IMR-90 (cell line): ENCODE measurements at regions of chr1 and their contacts with region 1.

Region 1: DNA sequence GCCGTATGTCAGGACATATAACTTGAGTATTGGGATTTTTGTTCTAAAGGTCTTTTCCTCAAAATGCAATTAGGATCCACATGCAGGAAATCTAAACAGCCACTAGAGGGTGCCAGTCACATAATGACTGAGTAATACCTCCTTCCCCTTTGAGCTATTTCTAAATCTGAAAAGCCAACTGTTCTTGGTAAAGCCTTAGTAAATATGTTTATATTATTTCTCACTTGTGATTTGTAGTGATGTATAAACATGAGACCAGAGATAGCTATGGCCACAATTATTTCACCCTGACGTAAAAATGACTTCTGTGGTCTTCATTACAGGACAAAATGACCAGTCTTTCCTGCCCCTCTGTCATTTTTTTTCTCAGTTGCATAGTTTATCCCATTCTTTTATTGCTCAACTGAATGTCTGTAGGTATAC is 41.0 kb upstream of the DR1 start:
- DNase-seq: peak; percentile 79
- ATAC-seq: peak; percentile 94
- H3K4me3 ChIP-seq: no peak overlapping the region
- H3K27ac ChIP-seq: no peak overlapping the region
- H3K4me1 ChIP-seq: no peaks in the 10 kb centered on the region
- H3K27me3 ChIP-seq: no peaks in the 10 kb centered on the region
- CTCF ChIP-seq: peak; percentile 90
- POLR2A ChIP-seq: 0 out of 2 replicates have a peak, but pooled peaks have one; percentile 31
- RAD21 ChIP-seq: peak; percentile 95

Region 2: DNA sequence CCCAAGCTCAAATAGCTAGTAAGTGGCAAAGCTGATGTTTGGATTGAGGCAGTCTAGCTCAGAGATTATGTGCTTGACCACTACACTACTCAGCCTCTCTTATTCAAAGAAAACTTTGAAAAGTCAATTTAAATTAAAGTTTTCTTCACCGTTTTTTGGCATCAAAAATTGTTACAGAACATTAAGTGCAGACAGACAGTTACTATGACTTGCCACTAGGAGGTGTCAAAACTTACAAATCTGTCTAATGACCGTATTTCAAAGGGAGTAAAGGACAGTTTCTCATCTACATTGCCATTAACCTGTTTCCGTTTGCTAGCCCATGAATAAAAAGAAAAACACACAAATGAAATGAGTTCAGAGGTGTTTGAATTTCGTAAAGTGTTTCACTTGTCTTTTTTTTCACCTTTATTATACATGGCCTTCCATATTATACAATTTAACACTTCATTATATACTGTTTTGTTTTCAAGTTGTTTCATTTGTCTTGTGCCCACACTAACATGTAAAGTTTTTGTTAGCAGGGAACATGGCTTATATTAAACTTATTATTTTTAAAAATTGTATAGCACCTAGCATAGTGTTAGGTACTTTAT is 283.1 kb before region 1 on chr1:
- CTCF ChIA-PET with region 1: no interaction called
- POLR2A ChIA-PET with region 1: no interaction called
- dilution Hi-C with region 1: no loop called
- in situ Hi-C with region 1: no loop called
- intact Hi-C with region 1: loop called (anchors 10 kb)
- DNase-seq: peak; percentile 61
- ATAC-seq: peak; percentile 86
- H3K4me3 ChIP-seq: no peak overlapping the region
- H3K27ac ChIP-seq: no peak overlapping the region
- H3K4me1 ChIP-seq: peaks cover under 1% of the 10 kb centered on the region; the same call in 1 of the 2 replicates
- H3K27me3 ChIP-seq: peaks cover 28% of the 10 kb centered on the region
- CTCF ChIP-seq: peak; percentile 73
- POLR2A ChIP-seq: no peak
- RAD21 ChIP-seq: peak; percentile 67

Region 3: DNA sequence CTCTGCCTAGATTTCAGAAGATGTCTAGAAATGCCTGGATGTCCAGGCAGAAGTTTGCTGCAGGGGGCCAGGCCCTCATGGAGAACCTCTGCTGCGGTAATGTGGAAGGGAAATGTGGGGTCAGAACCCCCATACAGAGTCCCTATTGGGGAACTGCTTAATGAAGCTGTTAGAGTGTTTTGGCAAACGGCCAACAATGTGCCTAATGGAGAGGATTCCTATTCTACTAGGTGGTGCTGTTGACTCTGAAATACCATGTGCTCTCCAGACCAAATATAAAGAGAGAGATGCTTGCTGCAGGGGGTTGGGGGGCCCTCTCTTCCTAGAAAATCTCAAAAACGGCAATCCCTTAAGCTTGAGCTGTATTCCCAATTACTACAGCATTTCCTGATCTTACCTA is 16.2 kb before region 1 on chr1:
- CTCF ChIA-PET with region 1: no interaction called
- POLR2A ChIA-PET with region 1: no interaction called
- dilution Hi-C with region 1: no loop called
- in situ Hi-C with region 1: no loop called
- intact Hi-C with region 1: no loop called
- DNase-seq: no peak
- ATAC-seq: no peak
- H3K4me3 ChIP-seq: no peak overlapping the region
- H3K27ac ChIP-seq: no peak overlapping the region
- H3K4me1 ChIP-seq: no peaks in the 10 kb centered on the region
- H3K27me3 ChIP-seq: no peaks in the 10 kb centered on the region
- CTCF ChIP-seq: no peak
- POLR2A ChIP-seq: no peak
- RAD21 ChIP-seq: no peak

Region 4: DNA sequence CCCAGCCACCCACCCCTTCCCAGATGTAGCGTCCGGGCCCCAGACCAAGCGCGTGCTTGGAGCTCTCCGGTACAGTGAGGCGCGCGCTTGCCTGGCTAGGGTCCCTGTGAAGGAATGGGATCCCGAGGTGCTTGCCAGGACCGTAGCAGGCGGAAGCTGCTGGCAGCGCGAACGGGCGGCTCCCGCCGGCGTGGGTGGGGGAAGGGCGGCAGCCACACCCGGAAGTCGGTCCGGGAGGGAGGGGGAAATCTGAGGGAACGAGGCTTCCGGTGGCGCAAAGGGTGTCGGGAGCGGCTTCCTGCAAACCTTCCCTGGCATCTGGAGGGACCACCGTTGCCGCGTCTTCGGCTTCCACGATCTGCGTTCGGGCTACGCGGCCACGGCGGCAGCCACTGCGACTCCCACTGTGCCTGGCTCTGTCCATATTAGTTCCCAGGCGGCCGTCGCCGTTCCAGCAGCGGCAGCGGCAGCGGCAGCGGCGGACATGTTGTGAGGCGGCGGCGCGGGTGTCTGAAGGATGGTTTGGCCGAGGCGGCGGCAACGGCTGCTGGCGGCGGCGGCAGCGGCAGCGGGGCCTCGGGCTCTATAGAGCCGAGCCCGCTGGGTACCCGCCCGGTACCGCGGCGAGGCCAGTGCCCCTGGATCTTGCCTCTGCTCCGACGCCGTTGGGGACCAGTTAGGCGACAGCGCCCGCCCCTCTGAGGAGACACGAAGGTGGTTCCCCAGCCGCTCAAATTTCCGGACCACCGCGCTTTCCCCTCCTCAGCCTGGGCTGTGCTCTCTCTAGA is 41.1 kb after region 1 on chr1 and contains the start of gene DR1:
- CTCF ChIA-PET with region 1: interaction called, 5 read pairs
- POLR2A ChIA-PET with region 1: interaction called, 3 read pairs
- dilution Hi-C with region 1: no loop called
- in situ Hi-C with region 1: no loop called
- intact Hi-C with region 1: loop called (anchors 1 kb)
- DNase-seq: peak; percentile 95
- ATAC-seq: peak; percentile 90
- H3K4me3 ChIP-seq: peak within 1 kb of the TSS; percentile 83
- H3K27ac ChIP-seq: peak within 1 kb of the TSS; percentile 93
- H3K4me1 ChIP-seq: peaks cover 3% of the 10 kb centered on the region; the same call in 1 of the 2 replicates
- H3K27me3 ChIP-seq: no peaks in the 10 kb centered on the region
- CTCF ChIP-seq: no peak
- POLR2A ChIP-seq: peak; percentile 91
- RAD21 ChIP-seq: no peak
- total RNA-seq, gene DR1: 39.4 and 46.9 TPM in 2 replicates

Region 5: GRCh38 chr1:93437976-93438605 is 133.4 kb after region 1 on chr1:
- CTCF ChIA-PET with region 1: no interaction called
- POLR2A ChIA-PET with region 1: no interaction called
- dilution Hi-C with region 1: no loop called
- in situ Hi-C with region 1: no loop called
- intact Hi-C with region 1: loop called (anchors 2 kb)
- DNase-seq: peak; percentile 65
- ATAC-seq: peak; percentile 82
- H3K4me3 ChIP-seq: no peak overlapping the region
- H3K27ac ChIP-seq: no peak overlapping the region
- H3K4me1 ChIP-seq: no peaks in the 10 kb centered on the region
- H3K27me3 ChIP-seq: peaks cover 17% of the 10 kb centered on the region
- CTCF ChIP-seq: peak; percentile 78
- POLR2A ChIP-seq: no peak
- RAD21 ChIP-seq: peak; percentile 81

Region 6: DNA sequence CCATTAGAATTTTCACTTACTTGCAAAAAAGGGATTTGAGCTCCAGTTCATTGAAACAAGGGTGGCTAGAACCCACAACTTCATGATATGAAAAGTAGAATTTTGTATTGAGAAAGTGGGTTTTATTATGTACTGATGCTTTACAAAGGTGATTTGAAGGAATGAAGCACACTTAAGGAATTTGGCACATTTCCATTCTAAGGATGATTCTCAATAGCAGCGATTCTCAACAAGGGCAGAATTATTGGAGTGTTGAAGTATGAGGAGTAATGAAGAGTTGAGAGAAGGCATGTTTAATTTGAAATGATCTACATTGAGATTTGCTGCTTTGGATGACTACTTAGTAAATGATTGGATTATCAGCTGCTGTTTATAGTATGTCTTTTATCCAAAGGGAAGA is 197.8 kb after region 1 on chr1:
- CTCF ChIA-PET with region 1: no interaction called
- POLR2A ChIA-PET with region 1: no interaction called
- dilution Hi-C with region 1: no loop called
- in situ Hi-C with region 1: no loop called
- intact Hi-C with region 1: no loop called
- DNase-seq: no peak
- ATAC-seq: no peak
- H3K4me3 ChIP-seq: no peak overlapping the region
- H3K27ac ChIP-seq: no peak overlapping the region
- H3K4me1 ChIP-seq: no peaks in the 10 kb centered on the region
- H3K27me3 ChIP-seq: no peaks in the 10 kb centered on the region
- CTCF ChIP-seq: no peak
- POLR2A ChIP-seq: no peak
- RAD21 ChIP-seq: no peak

Region 7: DNA sequence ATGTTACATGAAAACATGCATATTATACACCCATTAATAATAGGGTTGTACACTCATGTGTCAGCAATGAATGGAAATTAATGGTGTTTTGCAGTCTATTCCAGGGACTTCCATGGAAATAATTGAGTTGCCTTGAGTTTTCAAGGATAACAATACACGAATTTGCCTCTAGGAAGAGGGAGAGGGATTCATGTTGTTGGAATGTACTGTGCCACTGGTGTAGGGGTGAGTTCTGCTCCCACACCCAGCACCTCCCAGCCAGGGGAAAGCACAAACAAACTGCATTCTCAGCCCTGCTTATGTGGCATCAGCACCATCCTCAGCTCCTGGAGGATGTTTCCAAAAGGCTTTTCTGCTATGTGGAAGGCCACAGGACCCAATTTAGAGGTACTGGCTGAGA is 319.1 kb after region 1 on chr1:
- CTCF ChIA-PET with region 1: no interaction called
- POLR2A ChIA-PET with region 1: no interaction called
- dilution Hi-C with region 1: no loop called
- in situ Hi-C with region 1: loop called (anchors 10 kb)
- intact Hi-C with region 1: loop called (anchors 1 kb)
- DNase-seq: peak; percentile 77
- ATAC-seq: peak; percentile 60
- H3K4me3 ChIP-seq: no peak overlapping the region
- H3K27ac ChIP-seq: no peak overlapping the region
- H3K4me1 ChIP-seq: peaks cover 31% of the 10 kb centered on the region
- H3K27me3 ChIP-seq: no peaks in the 10 kb centered on the region
- CTCF ChIP-seq: no peak
- POLR2A ChIP-seq: no peak
- RAD21 ChIP-seq: no peak

Region 8: DNA sequence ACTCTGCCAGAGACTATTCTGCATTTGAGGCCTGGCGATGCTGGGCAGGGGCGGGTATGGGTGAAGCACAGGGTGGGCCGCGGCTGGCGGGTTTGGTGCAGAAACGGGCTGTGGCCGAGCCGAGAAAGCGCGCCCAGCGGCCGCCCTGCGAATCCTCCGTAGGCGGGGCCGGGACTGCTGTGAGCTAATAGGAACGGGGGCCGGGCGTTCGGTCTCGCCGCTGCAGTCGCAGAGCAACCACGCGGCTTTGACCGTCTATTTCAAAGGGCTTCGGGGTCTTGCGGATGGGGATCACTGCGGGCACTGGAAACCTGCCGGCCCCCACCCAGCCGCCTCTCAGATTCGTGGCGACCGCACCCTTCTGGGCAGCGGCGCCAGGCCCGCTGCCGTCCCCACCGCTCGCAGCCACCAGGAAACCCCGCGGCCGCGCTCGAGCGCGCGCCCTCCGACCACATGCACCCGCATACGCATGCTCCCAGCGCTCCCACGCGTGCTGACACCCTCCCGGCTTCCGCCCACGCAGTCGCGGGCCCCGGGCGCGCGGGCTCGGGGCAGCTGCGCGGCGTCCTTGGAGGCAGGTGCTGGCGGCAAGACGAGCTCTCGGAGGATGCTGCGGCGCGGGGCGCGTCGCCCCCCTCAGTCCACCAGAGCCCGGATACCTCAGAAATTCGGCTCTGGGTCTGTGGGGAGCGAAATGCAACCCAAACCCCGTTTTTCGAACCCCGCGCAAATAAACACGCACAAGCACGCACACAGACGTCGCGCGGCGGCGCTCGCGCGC is 541.7 kb after region 1 on chr1:
- CTCF ChIA-PET with region 1: interaction called, 3 read pairs
- POLR2A ChIA-PET with region 1: no interaction called
- dilution Hi-C with region 1: no loop called
- in situ Hi-C with region 1: no loop called
- intact Hi-C with region 1: loop called (anchors 2 kb)
- DNase-seq: peak; percentile 74
- ATAC-seq: peak; percentile 61
- H3K4me3 ChIP-seq: peak overlapping the region; percentile 92
- H3K27ac ChIP-seq: peak overlapping the region; percentile 89
- H3K4me1 ChIP-seq: peaks cover 4% of the 10 kb centered on the region
- H3K27me3 ChIP-seq: no peaks in the 10 kb centered on the region
- CTCF ChIP-seq: 0 out of 2 replicates have a peak, but pooled peaks have one; percentile 13
- POLR2A ChIP-seq: peak; percentile 33; the same call in 1 of the 2 replicates
- RAD21 ChIP-seq: 0 out of 2 replicates have a peak, but pooled peaks have one; percentile 10